ENCODE measurements at regions of chr1 and their contacts with region 1.

Region 1: DNA sequence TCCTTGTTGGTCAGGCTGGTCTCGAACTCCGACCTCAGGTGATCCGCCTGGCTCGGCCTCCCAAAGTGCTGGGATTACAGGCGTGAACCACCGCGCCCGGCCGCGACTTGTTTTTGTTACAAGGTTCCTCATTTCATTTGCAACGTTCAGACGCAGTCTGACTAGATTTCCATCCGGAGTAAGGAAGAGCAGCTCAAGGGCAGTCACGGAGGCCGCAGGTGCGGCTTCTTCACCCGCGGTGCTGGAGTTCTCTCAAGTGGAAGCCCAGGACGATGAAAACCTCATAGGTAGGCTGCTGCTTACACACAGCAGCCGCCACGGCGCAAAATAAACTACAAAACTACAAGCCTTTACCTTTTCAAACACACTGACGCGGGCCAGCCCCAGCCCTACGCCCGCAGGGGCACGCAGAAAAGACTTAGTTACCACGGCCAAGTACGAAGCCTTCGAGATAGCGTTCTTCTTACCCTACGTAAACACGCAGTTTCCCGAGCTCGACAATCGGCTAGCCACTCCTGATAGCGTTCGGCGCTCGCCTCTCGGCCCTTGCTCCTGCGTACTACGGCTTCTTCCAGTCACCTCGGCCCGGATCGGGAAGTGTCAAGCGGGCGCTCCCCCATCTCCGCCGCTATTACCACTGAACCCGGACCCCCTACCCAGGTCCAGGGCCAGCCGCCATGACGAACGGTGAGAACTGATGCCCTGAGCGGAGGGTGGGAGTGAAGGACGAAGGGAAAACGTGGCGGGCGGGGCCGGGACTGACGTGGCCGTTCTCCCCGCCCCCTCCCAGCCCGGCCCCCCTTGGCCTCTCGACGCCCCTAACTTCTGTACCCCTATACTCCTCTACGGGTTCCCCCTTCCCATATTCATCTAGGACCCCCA is at the start of gene TMEM167B:
- DNase-seq: peak; percentile 94
- H3K4me3 ChIP-seq: peak within 1 kb of the TSS; percentile 90
- H3K27ac ChIP-seq: peak within 1 kb of the TSS; percentile 78
- H3K4me1 ChIP-seq: peaks cover 19% of the 10 kb centered on the region
- CTCF ChIP-seq: no peak
- total RNA-seq, gene TMEM167B: 12.3 and 14.9 TPM in 2 replicates

Region 2: GRCh38 chr1:109112652-109113285 is 22.3 kb after region 1 on chr1:
- CTCF ChIA-PET with region 1: no interaction called
- POLR2A ChIA-PET with region 1: no interaction called
- intact Hi-C with region 1: loop called (anchors 1 kb)
- DNase-seq: peak; percentile 83
- H3K4me3 ChIP-seq: peak overlapping the region; percentile 16
- H3K27ac ChIP-seq: no peak overlapping the region
- H3K4me1 ChIP-seq: peaks cover 13% of the 10 kb centered on the region
- CTCF ChIP-seq: peak; percentile 95